Activated CD4-positive, alpha-beta T cell treated with anti-CD3 and anti-CD28 coated beads for 36 hours (primary cell): ENCODE measurements at regions of chr4 and their contacts with region 1.

Region 1: DNA sequence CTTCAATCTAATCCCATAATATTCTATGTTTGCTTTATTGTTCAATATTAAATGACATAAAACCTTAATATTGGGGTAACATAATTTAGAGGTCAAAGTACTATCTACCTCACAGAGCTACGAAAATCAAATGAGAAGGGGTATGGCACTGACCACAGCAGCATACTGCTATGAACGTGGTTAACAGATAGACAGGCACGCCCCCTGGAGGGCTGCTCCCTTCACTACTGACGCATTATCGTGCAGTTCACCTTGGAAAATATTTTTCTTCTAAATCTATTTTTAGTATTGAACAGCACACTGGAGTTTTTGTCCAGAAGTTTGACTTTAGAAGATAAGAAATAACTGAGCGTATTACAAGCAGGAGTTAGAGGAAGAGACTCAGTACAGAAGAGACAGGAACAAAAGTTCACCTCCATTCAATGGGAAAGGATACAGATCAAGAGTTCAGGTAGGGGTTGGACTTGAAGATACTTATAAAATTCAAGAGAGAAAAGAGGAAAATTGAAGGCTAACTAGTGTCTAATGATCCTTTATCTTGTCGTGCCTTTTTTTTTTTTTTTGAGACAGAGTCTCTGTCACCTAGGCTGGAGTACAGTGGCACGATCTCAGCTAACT is 22.7 kb downstream of the MAP9 start:
- DNase-seq: peak; percentile 72
- ATAC-seq: peak; percentile 74
- H3K4me3 Mint-ChIP-seq: no peak overlapping the region
- H3K27ac Mint-ChIP-seq: no peak overlapping the region
- H3K4me1 Mint-ChIP-seq: no peaks in the 10 kb centered on the region
- H3K27me3 Mint-ChIP-seq: no peaks in the 10 kb centered on the region

Region 2: GRCh38 chr4:154807042-154807630 is 546.9 kb before region 1 on chr4:
- CTCF ChIA-PET with region 1: no interaction called
- POLR2A ChIA-PET with region 1: no interaction called
- intact Hi-C with region 1: loop called (anchors 5 kb)
- DNase-seq: no peak
- ATAC-seq: no peak
- H3K4me3 Mint-ChIP-seq: no peak overlapping the region
- H3K27ac Mint-ChIP-seq: no peak overlapping the region
- H3K4me1 Mint-ChIP-seq: no peaks in the 10 kb centered on the region
- H3K27me3 Mint-ChIP-seq: peaks cover 3% of the 10 kb centered on the region

Region 3: DNA sequence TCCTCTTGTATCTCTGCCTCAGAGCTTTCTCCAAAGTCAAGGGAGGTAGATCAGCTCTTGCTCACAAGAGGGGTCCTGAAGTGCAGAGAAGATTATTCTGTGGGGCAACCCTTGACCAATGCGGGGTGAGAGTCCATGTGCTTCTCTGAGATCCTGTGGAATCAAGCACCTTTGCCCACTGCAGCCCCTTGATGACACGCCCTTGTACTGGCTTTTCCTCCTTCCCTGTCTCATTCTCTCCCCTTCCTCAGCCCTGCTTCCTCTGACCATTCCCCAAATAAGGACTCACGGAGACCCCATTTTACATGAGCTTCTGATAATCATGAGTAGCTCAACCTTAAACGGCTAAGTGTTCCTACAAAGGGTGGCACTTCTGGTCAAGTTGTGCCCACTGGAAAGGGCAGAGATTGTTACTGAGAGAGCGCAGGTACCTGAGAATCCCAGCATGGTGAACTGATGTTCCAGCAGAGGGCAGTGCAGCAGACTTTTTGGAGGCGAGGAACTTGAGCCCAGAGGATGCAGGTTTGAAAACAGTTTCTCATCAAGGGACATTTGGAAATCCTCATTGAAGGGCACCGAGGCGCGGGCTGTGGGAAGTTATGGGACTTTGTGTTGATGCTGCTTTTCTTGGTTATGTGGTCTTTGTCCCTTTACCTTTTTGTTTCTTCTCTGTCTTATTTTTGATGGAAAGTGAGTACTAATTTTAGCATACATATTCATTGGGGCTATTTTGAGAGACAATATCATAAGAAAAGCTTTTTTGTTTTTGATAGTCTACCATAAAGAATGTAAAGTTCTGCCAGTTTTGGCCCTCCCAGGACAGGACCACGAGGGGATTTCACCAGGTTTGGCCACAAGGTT is 371.6 kb before region 1 on chr4:
- CTCF ChIA-PET with region 1: no interaction called
- POLR2A ChIA-PET with region 1: no interaction called
- intact Hi-C with region 1: loop called (anchors 1 to 2 kb)
- DNase-seq: peak; percentile 71
- ATAC-seq: peak; percentile 49
- H3K4me3 Mint-ChIP-seq: no peak overlapping the region
- H3K27ac Mint-ChIP-seq: no peak overlapping the region
- H3K4me1 Mint-ChIP-seq: no peaks in the 10 kb centered on the region
- H3K27me3 Mint-ChIP-seq: peaks cover 2% of the 10 kb centered on the region

Region 4: GRCh38 chr4:155025762-155026457 is 328.1 kb before region 1 on chr4:
- CTCF ChIA-PET with region 1: no interaction called
- POLR2A ChIA-PET with region 1: no interaction called
- intact Hi-C with region 1: loop called in 1 of 2 experiments (anchors 1 kb)
- DNase-seq: peak; percentile 59
- ATAC-seq: peak; percentile 64
- H3K4me3 Mint-ChIP-seq: no peak overlapping the region
- H3K27ac Mint-ChIP-seq: no peak overlapping the region
- H3K4me1 Mint-ChIP-seq: no peaks in the 10 kb centered on the region
- H3K27me3 Mint-ChIP-seq: peaks cover 8% of the 10 kb centered on the region